Mammary epithelial cell (primary cell): ENCODE measurements at regions of chr19 and their contacts with region 1.

Region 1: GRCh38 chr19:35899547-35900214 is 659 bp downstream of the NFKBID start:
- DNase-seq: peak; percentile 82
- H3K4me3 ChIP-seq: peak overlapping the region; percentile 82 to 96 (median 84)
- H3K27ac ChIP-seq: peak overlapping the region; percentile 78
- H3K4me1 ChIP-seq: peaks cover 27% of the 10 kb centered on the region
- H3K27me3 ChIP-seq: no peaks in the 10 kb centered on the region
- CTCF ChIP-seq: no peak

Region 2: DNA sequence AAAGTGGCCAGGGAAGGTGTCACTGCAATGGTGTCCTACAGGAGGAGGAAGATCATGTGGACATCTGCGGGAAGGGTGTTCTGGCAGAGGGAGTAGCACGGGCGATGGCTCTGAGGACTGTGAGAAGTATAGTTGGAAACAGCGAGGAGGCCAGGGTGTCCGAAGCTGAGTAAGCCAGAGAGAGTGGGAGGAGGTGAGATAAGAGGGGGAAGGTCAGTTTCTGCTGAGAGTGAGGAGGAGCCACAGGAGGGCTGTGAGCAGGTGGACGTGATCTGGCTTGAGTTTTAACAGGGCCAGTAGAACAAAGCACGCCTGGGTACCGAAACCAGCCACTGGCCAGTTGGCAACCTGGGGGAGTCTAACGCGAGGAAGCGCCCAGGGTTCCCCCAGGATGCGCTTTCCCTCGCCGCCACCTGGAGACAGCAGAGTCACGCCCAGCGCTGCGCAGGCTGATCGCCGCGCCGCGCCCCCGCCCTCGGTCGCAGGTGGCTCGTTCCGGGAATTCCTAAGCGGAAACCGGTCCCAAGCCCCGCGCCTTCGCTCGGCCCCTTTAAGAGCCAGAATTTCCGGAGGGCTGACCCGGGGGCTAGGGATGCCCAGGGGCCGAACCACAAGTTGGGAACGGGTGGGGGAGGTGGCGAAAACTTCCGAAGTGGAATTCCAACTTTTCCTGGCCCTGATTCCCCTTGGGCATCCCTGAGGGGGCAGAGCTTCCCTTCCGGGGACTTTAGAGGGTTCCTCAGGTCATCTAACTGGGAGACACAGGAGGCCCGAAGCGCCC is 652.0 kb before region 1 on chr19:
- CTCF ChIA-PET with region 1: no interaction called
- dilution Hi-C with region 1: no loop called
- in situ Hi-C with region 1: no loop called
- intact Hi-C with region 1: no loop called
- DNase-seq: peak; percentile 96
- H3K4me3 ChIP-seq: peak overlapping the region; percentile 93 to 99 (median 95)
- H3K27ac ChIP-seq: peak overlapping the region; percentile 93
- H3K4me1 ChIP-seq: peaks cover 18% of the 10 kb centered on the region
- H3K27me3 ChIP-seq: no peaks in the 10 kb centered on the region
- CTCF ChIP-seq: peak; percentile 39 to 78

Region 3: DNA sequence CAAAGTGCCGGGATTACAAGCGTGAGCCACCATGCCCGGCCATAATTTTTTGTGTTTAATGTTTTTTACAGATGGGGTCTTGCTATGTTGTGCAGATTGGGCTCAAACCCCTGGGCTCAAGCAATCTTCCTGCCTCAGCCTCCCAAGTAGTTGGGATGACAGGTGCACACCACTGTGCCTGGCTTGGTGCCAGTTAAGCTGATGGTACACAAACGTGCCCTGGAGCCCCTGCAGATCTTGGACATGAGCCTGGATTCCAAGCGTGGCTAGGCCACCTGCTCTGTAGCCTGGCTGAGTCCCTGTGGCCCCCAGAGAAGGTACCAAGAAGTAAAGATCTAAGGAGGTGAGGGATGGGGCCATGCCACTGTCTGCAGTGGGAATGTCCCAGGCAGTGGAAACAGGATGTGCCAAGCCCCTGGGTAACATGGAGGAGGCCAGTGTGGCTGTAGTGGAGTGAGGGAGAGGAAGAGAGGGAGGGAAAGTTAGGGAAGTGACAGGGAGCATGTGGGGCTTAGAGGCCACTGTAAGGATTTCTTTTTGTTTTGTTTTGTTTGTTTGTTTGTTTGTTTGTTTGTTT is 94.1 kb before region 1 on chr19:
- CTCF ChIA-PET with region 1: no interaction called
- dilution Hi-C with region 1: loop called (anchors 5 kb)
- in situ Hi-C with region 1: no loop called
- intact Hi-C with region 1: no loop called
- DNase-seq: no peak
- H3K4me3 ChIP-seq: no peak overlapping the region
- H3K27ac ChIP-seq: no peak overlapping the region
- H3K4me1 ChIP-seq: no peaks in the 10 kb centered on the region
- H3K27me3 ChIP-seq: no peaks in the 10 kb centered on the region
- CTCF ChIP-seq: no peak

Region 4: GRCh38 chr19:35882114-35882832 is 17.4 kb before region 1 on chr19:
- CTCF ChIA-PET with region 1: no interaction called
- dilution Hi-C with region 1: no loop called
- in situ Hi-C with region 1: no loop called
- intact Hi-C with region 1: loop called (anchors 1 kb)
- DNase-seq: peak; percentile 66
- H3K4me3 ChIP-seq: no peak overlapping the region
- H3K27ac ChIP-seq: no peak overlapping the region
- H3K4me1 ChIP-seq: no peaks in the 10 kb centered on the region
- H3K27me3 ChIP-seq: no peaks in the 10 kb centered on the region
- CTCF ChIP-seq: peak; percentile 39 to 58

Region 5: DNA sequence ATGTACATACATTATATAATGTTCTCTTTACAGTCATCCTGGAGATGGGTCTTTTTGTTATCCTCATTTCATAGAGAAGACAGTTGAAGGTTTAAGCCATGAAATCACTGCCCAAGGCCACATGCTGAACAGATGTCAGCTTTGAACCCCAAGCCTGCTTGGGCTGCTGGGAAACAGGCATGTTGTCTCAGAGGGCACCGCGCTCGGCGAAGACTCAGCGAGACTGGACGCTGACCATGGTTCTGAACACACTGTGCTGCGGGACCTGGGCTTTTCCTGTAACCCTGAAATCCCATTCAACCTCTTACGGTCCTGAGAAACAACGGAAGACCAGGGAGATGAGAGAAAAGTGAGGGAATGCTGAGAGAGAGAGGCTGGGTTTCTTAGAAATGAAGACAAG is 63.8 kb after region 1 on chr19:
- CTCF ChIA-PET with region 1: no interaction called
- dilution Hi-C with region 1: loop called (anchors 5 kb)
- in situ Hi-C with region 1: no loop called
- intact Hi-C with region 1: no loop called
- DNase-seq: peak; percentile 39
- H3K4me3 ChIP-seq: no peak overlapping the region
- H3K27ac ChIP-seq: no peak overlapping the region
- H3K4me1 ChIP-seq: peaks cover 11% of the 10 kb centered on the region
- H3K27me3 ChIP-seq: peaks cover 13% of the 10 kb centered on the region
- CTCF ChIP-seq: no peak